ENCODE measurements at regions of chr22 and their contacts with region 1.

Region 1: GRCh38 chr22:28229566-28230485 is 310.8 kb upstream of the PITPNB start:
- DNase-seq: no peak
- H3K4me3 Mint-ChIP-seq: no peak overlapping the region
- H3K27ac Mint-ChIP-seq: no peak overlapping the region
- H3K4me1 Mint-ChIP-seq: no peaks in the 10 kb centered on the region
- H3K27me3 Mint-ChIP-seq: peaks cover 3% of the 10 kb centered on the region

Region 2: GRCh38 chr22:28051787-28052356 is 178.0 kb before region 1 on chr22:
- intact Hi-C with region 1: loop called (anchors 10 kb)
- DNase-seq: no peak
- H3K4me3 Mint-ChIP-seq: no peak overlapping the region
- H3K27ac Mint-ChIP-seq: no peak overlapping the region
- H3K4me1 Mint-ChIP-seq: no peaks in the 10 kb centered on the region
- H3K27me3 Mint-ChIP-seq: no peaks in the 10 kb centered on the region

Measured in activated T-helper 1 cell treated with anti-CD3 and anti-CD28 coated beads, Interleukin-12 subunit alpha, Interleukin-12 subunit beta, Interleukin-2, Interleukin-4 antibody, amounts not matched to agents 30 ng/mL and 10 ng/mL and 1 ng/mL, durations not matched to agents 14 hours and 24 hours and 36 hours (primary cell).